ENCODE measurements at regions of chr1 and their contacts with region 1.

Region 1: GRCh38 chr1:157073944-157074767 is 25.5 kb downstream of the ETV3L start:
- DNase-seq: peak; percentile 48 to 86 (median 72)
- ATAC-seq: peak; percentile 53 to 82 (median 76)
- H3K4me3 ChIP-seq: no peak overlapping the region
- H3K27ac ChIP-seq: no peak overlapping the region
- H3K4me1 ChIP-seq: peaks cover 0 to 3% (median 0%) of the 10 kb centered on the region in 3 donors
- H3K27me3 ChIP-seq: no peaks in the 10 kb centered on the region
- CTCF ChIP-seq: peak; percentile 43 to 68 (median 56)

Region 2: DNA sequence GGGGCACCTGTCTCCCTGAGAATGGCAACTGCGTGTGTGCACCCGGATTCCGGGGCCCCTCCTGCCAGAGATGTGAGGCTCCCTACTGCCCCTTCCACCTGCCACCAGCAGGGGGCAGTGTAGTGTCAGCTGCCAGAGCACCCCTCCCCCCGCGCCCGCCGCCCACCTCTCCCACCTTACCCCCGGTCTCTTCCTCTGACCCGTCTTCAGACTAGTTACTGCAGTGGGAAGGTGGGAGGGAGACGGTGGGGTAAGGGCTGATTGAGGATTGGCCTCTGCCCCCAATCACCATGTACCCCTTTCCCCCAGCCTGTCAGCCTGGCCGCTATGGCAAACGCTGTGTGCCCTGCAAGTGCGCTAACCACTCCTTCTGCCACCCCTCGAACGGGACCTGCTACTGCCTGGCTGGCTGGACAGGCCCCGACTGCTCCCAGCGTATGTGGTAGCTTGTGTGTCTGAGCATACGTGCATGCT is 163.8 kb before region 1 on chr1:
- intact Hi-C with region 1: loop called in 1 of 3 experiments (anchors 10 kb)
- DNase-seq: peak in 3 of 6 donors; percentile 45 to 76 (median 59)
- ATAC-seq: peak in 2 of 4 donors; percentile 37 to 44
- H3K4me3 ChIP-seq: no peak overlapping the region
- H3K27ac ChIP-seq: no peak overlapping the region
- H3K4me1 ChIP-seq: no peaks in the 10 kb centered on the region
- H3K27me3 ChIP-seq: no peaks in the 10 kb centered on the region
- CTCF ChIP-seq: peak; percentile 75 to 83 (median 80)

Region 3: DNA sequence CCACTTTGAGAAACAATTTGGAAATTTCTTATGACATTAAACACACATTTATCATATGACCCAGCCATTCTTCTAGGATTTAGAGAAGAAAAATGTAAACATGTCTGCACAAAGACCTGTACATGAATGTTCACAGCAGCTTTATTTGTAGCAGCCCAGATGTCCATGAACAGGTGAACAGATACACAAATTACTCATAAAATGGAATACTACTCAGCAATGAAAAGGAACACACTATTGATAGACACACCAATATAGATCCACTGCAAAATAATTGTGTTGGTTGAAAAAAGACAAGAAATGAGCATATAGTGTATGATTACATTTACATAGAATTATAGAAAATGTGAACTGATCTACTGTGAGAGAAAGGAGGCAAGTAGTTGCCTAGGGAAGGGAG is 54.7 kb before region 1 on chr1:
- intact Hi-C with region 1: no loop called
- DNase-seq: no peak
- ATAC-seq: no peak
- H3K4me3 ChIP-seq: no peak overlapping the region
- H3K27ac ChIP-seq: no peak overlapping the region
- H3K4me1 ChIP-seq: no peaks in the 10 kb centered on the region
- H3K27me3 ChIP-seq: no peaks in the 10 kb centered on the region
- CTCF ChIP-seq: no peak

Region 4: GRCh38 chr1:157156058-157156541 is 81.9 kb after region 1 on chr1:
- intact Hi-C with region 1: no loop called
- DNase-seq: peak; percentile 43 to 91 (median 70)
- ATAC-seq: peak; percentile 81 to 86 (median 84)
- H3K4me3 ChIP-seq: no peak overlapping the region
- H3K27ac ChIP-seq: no peak overlapping the region
- H3K4me1 ChIP-seq: peaks cover 0 to 21% (median 4%) of the 10 kb centered on the region in 3 donors
- H3K27me3 ChIP-seq: no peaks in the 10 kb centered on the region
- CTCF ChIP-seq: peak; percentile 94 to 97 (median 96)